Head of caudate nucleus (tissue), 42 donors: ENCODE measurements at regions of chr1 and their contacts with region 1.

Region 1: GRCh38 chr1:41776891-41777441 is 141.8 kb downstream of the HIVEP3 start:
- DNase-seq: peak; percentile 81 to 98 (median 92)

Region 2: GRCh38 chr1:41618091-41618825 is 158.7 kb before region 1 on chr1:
- intact Hi-C with region 1: loop called (anchors 5 kb)
- DNase-seq: peak; percentile 78 to 96 (median 91)